ENCODE measurements at regions of chr2 and their contacts with region 1.

Region 1: DNA sequence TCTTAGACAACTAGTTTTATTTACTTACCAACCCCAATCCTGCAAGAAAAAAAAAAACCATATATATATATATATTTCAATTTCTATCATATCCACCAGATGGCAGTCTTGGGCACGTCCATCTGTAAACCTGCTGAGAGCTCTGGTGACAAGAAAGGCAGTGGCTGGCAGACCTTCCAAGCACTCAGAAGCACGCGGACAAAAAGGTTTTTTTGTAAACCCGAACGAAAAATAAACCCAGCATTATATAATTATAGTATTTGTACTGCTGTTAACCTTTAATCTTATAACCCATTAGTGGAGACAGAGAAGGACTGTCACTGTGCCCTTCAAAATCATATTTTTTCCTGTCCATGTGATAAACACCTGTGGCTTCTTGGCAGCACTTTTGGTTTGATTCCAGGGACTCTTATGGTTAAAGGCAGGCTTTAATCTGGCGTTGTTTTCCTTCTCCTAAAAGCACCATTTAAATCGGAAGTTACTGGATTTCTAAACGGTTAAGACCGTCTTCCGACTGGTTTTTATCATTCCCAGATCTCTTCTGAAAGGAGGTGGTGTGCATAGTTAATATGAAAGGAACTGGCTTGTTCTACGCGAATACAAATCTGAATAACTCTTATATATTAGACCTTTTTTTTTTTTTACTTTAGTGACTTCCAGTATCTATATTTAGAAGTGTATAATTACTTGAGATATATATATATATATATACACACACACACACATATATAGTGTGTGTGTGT is 31.0 kb upstream of the SLC3A1 start:
- DNase-seq: peak in 7 of 10 donors; percentile 56 to 76 (median 63)
- H3K4me3 ChIP-seq: peak overlapping the region; percentile 14 to 74 (median 51)
- H3K27ac ChIP-seq: peak overlapping the region in 58 of 59 donors; percentile 27 to 94 (median 80)
- H3K27me3 ChIP-seq: no peaks in the 10 kb centered on the region
- CTCF ChIP-seq: peak; percentile 55 to 94 (median 78)

Region 2: DNA sequence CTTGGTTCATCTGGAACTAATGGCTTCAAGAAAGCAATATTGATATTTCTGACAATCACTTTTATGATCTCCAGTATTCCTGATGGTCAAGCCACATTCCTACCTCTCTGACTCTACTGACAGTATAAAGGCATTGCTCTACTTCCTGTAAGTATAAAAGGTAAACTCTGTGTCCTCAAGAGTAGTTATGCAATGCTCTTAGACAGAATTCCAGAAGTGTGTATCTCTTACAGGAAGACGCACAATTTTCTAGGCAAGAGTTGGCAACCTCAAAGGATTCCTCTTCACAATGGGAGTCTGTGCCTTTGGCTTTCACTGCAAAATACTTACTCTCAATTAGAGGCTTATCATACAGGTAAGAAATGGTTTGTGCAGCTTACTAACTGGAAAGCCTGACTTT is 748.6 kb before region 1 on chr2:
- intact Hi-C with region 1: no loop called
- DNase-seq: no peak
- H3K4me3 ChIP-seq: no peak overlapping the region
- H3K27ac ChIP-seq: no peak overlapping the region
- H3K27me3 ChIP-seq: no peaks in the 10 kb centered on the region
- CTCF ChIP-seq: no peak

Region 3: DNA sequence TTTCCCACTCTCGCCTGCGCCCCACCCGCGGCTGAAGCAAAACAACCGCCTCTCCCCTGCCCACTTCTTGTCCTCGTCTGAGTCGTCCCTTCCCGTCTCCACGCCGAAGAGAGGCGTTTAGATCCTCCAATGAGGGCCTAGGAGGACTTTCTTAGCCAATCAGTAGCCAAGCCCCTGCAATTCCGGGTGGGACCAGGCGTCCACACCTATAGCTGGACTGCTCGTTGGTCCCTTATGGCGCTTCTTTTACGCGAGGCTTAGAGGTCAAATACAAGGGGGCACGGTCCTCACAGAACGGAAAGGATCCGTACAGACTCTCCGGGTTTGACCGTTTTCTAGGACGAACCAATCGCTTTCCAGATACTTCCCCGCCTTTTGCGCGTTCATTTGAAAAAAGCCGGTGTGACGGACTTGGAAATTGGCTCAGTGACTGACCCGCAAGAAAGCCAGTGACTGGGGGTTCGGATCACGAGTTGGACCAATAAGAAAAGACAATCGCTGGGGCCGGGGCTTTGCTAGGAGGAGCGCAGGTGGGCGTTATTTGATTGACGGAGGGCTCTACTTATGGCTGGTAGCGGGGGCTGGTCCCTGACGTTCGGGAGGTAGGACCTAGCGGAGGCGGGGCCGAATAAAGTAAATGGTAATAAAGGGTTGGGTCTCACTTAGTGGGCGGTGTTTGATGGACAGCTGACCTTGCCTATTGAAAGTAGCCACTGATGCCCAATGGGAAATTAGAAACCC is 76.2 kb before region 1 on chr2:
- intact Hi-C with region 1: loop called (anchors 2 to 5 kb)
- DNase-seq: peak; percentile 92 to 100 (median 100)
- H3K4me3 ChIP-seq: peak overlapping the region; percentile 48 to 100 (median 73)
- H3K27ac ChIP-seq: peak overlapping the region; percentile 86 to 100 (median 99)
- H3K27me3 ChIP-seq: no peaks in the 10 kb centered on the region
- CTCF ChIP-seq: peak in 12 of 56 donors; percentile 4 to 37 (median 14)

Region 4: GRCh38 chr2:44201648-44202165 is 42.6 kb before region 1 on chr2:
- intact Hi-C with region 1: no loop called
- DNase-seq: no peak
- H3K4me3 ChIP-seq: peak overlapping the region in 1 of 59 donors; percentile 2
- H3K27ac ChIP-seq: peak overlapping the region in 1 of 59 donors; percentile 35
- H3K27me3 ChIP-seq: no peaks in the 10 kb centered on the region
- CTCF ChIP-seq: no peak

Measured in dorsolateral prefrontal cortex (tissue), 120 donors.